CD8-positive, alpha-beta T cell (primary cell): ENCODE measurements at regions of chr11 and their contacts with region 1.

Region 1: GRCh38 chr11:68584097-68584496 is 100.2 kb upstream of the GAL start:
- DNase-seq: peak; percentile 22 to 71 (median 58)
- ATAC-seq: peak; percentile 75
- H3K4me3 ChIP-seq: no peak overlapping the region
- H3K4me3 Mint-ChIP-seq: no peak overlapping the region
- H3K27ac ChIP-seq: no peak overlapping the region
- H3K27ac Mint-ChIP-seq: no peak overlapping the region
- H3K4me1 ChIP-seq: no peaks in the 10 kb centered on the region
- H3K4me1 Mint-ChIP-seq: peaks cover 5% of the 10 kb centered on the region
- H3K27me3 ChIP-seq: no peaks in the 10 kb centered on the region
- H3K27me3 Mint-ChIP-seq: no peaks in the 10 kb centered on the region
- CTCF ChIP-seq: peak; percentile 69

Region 2: DNA sequence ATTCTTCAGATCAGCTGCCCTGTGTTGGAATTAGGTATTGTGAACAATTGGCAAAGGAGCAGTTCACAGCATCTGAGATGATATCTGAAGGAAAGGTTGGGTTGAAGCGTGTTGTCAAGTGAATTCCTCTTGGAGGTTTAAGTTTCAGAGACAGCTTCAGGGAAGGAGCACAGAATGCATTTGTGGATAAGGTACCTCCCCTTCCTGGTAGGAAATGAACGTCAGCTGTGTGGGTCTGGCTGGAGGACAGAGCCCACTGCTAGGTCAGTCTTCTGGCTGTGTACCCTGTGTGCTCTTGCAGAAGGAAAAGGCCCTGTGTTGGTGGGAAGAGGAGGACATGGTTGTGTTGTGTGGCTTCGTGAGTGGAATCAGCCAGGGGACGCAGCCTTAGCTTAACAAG is 12.1 kb after region 1 on chr11:
- CTCF ChIA-PET with region 1: interaction called, 10 read pairs
- POLR2A ChIA-PET with region 1: no interaction called
- intact Hi-C with region 1: no loop called
- DNase-seq: no peak
- ATAC-seq: no peak
- H3K4me3 ChIP-seq: no peak overlapping the region
- H3K4me3 Mint-ChIP-seq: no peak overlapping the region
- H3K27ac ChIP-seq: no peak overlapping the region
- H3K27ac Mint-ChIP-seq: no peak overlapping the region
- H3K4me1 ChIP-seq: no peaks in the 10 kb centered on the region
- H3K4me1 Mint-ChIP-seq: no peaks in the 10 kb centered on the region
- H3K27me3 ChIP-seq: no peaks in the 10 kb centered on the region
- H3K27me3 Mint-ChIP-seq: no peaks in the 10 kb centered on the region
- CTCF ChIP-seq: no peak

Region 3: GRCh38 chr11:68869251-68869960 is 285.3 kb after region 1 on chr11:
- CTCF ChIA-PET with region 1: no interaction called
- POLR2A ChIA-PET with region 1: no interaction called
- intact Hi-C with region 1: no loop called
- DNase-seq: peak in 1 of 9 experiments; percentile 18
- ATAC-seq: no peak
- H3K4me3 ChIP-seq: peak overlapping the region; percentile 16 to 23
- H3K4me3 Mint-ChIP-seq: peak overlapping the region; percentile 85
- H3K27ac ChIP-seq: no peak overlapping the region
- H3K27ac Mint-ChIP-seq: no peak overlapping the region
- H3K4me1 ChIP-seq: peaks cover 8% of the 10 kb centered on the region
- H3K4me1 Mint-ChIP-seq: peaks cover 20% of the 10 kb centered on the region
- H3K27me3 ChIP-seq: no peaks in the 10 kb centered on the region
- H3K27me3 Mint-ChIP-seq: peaks cover 32% of the 10 kb centered on the region
- CTCF ChIP-seq: no peak